A549 (cell line): ENCODE measurements at regions of chr16 and their contacts with region 1.

Region 1: DNA sequence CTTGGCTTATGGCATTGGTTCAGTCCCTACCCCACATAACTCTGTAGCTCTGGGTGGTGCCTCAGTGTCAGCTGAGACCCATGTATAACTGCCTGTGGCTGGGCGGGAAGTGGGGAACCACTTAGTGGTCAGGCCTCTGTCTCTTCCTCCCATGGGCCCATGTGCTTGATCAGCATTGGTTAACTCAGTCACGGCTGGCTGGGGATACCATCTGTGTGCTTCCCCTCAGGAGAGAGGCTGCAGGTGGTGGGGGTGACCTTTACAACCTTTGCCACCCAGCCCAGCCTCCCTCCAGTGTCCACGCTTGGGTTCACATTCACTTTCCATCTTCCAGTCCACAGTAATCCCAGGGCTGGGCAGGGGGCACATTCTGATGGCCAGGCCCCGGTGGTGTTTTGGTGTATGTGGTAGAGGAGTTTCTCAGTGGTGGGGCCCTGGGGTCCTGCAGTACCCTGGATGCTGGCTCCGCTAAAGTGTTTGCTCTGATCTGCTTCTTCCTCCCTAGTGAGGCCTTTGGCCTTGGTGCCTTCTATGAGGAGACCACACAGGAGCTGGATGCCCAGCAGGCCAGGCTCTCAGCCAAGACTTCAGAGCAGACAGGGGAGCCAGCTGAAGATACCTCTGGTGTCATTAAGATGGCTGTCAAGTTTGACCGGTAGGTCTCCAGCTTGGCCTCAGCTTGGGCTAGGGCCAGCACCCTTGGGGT is 10.2 kb upstream of the NFATC3 start:
- DNase-seq: no peak
- ATAC-seq: no peak
- H3K4me3 ChIP-seq: no peak overlapping the region
- H3K27ac ChIP-seq: no peak overlapping the region
- H3K4me1 ChIP-seq: peaks cover 16% of the 10 kb centered on the region
- CTCF ChIP-seq: no peak
- EP300 ChIP-seq: no peak
- POLR2A ChIP-seq: no peak
- RAD21 ChIP-seq: no peak

Region 2: GRCh38 chr16:68049449-68049848 is 25.6 kb before region 1 on chr16:
- CTCF ChIA-PET with region 1: no interaction called
- POLR2A ChIA-PET with region 1: no interaction called
- DNase-seq: no peak
- ATAC-seq: no peak
- H3K4me3 ChIP-seq: no peak overlapping the region
- H3K27ac ChIP-seq: no peak overlapping the region
- H3K4me1 ChIP-seq: no peaks in the 10 kb centered on the region
- CTCF ChIP-seq: no peak
- EP300 ChIP-seq: no peak
- POLR2A ChIP-seq: no peak
- RAD21 ChIP-seq: no peak

Region 3: DNA sequence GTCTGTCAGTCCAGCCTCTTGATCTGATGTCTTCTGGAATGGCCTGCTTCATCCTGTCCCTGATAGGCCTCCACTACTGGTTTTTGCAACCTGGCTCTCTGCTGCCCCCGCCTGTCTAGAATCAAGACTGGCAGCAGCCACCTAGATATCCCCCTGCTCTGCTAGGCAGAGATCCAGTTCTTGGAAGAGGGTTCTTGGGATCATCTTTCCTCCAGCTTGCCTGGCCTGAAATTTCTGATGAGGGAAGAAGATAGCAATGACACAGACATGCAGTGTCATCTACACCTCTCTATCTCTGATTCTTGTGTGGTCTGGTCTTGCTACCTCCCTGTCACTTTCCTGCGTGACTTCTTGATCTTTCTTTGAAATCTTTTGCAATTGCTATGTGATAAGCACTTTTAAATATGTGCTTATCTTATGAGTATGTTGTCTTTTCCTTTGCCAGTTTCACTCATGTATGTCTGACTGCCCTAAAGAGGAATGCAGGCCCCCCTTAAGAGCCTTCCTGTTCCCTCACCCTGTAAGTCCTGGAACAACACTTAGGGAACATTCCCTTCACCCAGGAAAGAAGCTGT is 10.1 kb before region 1 on chr16:
- CTCF ChIA-PET with region 1: interaction called, 27 read pairs
- POLR2A ChIA-PET with region 1: no interaction called
- DNase-seq: peak; percentile 67 to 87
- ATAC-seq: peak; percentile 93 to 99
- H3K4me3 ChIP-seq: no peak overlapping the region
- H3K27ac ChIP-seq: no peak overlapping the region
- H3K4me1 ChIP-seq: no peaks in the 10 kb centered on the region
- CTCF ChIP-seq: peak; percentile 72
- EP300 ChIP-seq: no peak
- POLR2A ChIP-seq: no peak
- RAD21 ChIP-seq: peak; percentile 62 to 70

Region 4: DNA sequence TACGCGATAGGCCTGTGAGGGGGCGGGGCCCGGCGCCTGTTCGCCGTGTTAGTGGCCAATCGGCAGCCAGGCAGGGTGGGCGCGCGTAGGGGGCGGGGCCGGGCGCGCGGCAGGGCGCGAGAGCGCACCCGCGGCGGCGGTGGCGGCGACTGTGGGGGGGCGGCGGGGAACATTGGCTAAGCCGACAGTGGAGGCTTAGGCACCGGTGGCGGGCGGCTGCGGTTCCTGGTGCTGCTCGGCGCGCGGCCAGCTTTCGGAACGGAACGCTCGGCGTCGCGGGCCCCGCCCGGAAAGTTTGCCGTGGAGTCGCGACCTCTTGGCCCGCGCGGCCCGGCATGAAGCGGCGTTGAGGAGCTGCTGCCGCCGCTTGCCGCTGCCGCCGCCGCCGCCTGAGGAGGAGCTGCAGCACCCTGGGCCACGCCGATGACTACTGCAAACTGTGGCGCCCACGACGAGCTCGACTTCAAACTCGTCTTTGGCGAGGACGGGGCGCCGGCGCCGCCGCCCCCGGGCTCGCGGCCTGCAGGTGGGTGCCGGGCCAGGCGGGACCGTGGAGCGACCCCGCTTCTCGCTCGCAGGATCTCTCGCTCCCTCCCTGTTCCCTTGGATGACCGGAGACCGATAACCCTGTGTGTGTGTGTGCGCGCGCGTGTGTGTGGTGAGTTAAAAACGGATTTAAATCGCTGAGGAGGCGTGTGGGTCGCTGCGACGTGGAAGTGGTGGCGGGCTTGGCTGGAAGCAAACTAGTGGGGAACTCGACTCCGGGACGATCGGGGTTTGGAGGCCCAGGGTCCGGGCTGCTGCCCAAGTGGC is 10.5 kb after region 1 on chr16 and contains the start of gene NFATC3:
- CTCF ChIA-PET with region 1: interaction called, 4 read pairs
- POLR2A ChIA-PET with region 1: interaction called, 20 read pairs
- DNase-seq: peak; percentile 34 to 97
- ATAC-seq: peak; percentile 75 to 84
- H3K4me3 ChIP-seq: peak within 1 kb of the TSS; percentile 96
- H3K27ac ChIP-seq: peak within 1 kb of the TSS; percentile 94 to 95
- H3K4me1 ChIP-seq: peaks cover 34% of the 10 kb centered on the region
- CTCF ChIP-seq: no peak
- EP300 ChIP-seq: no peak
- POLR2A ChIP-seq: peak; percentile 73
- RAD21 ChIP-seq: no peak
- polyA plus RNA-seq, gene NFATC3: 23.9 and 32.4 TPM in 2 replicates

Region 5: GRCh38 chr16:68105611-68106010 is 30.6 kb after region 1 on chr16:
- CTCF ChIA-PET with region 1: no interaction called
- POLR2A ChIA-PET with region 1: no interaction called
- DNase-seq: no peak
- ATAC-seq: no peak
- H3K4me3 ChIP-seq: no peak overlapping the region
- H3K27ac ChIP-seq: no peak overlapping the region
- H3K4me1 ChIP-seq: no peaks in the 10 kb centered on the region
- CTCF ChIP-seq: no peak
- EP300 ChIP-seq: no peak
- POLR2A ChIP-seq: no peak
- RAD21 ChIP-seq: no peak